H1 (cell line): ENCODE measurements at regions of chr2 and their contacts with region 1.

Region 1: DNA sequence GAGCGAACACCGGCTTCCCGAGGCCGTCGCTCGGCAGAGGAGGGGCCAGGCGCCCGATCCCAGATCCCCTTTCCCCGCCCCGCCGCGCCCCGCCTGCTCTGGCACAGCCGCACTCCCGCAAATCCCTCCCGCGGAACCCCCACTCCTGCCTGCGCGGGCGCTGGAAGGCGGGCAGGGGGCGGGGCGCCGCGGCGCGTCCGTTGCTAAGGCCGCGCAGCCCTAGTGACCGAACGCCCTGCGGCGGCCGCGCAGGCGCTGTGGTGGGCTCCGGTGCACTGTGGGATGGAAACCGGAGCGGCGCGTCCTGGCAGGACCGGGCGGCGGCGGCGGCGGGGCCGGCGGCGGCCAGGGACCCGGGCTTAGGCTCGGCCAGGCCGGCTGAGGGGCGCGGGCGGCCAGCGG is at the start of gene TRAF3IP1:
- DNase-seq: peak; percentile 62 to 94
- H3K4me3 ChIP-seq: peak within 1 kb of the TSS; percentile 65 to 91 (median 66)
- H3K27ac ChIP-seq: no peak within 1 kb of the TSS
- H3K4me1 ChIP-seq: peaks cover 0 to 10% (median 0%) of the 10 kb centered on the region in 4 experiments; a peak in 2 of 7 replicates
- H3K27me3 ChIP-seq: no peaks in the 10 kb centered on the region; a peak in 1 of 7 replicates
- CTCF ChIP-seq: no peak
- EP300 ChIP-seq: no peak
- POLR2A ChIP-seq: no peak
- RAD21 ChIP-seq: no peak
- total RNA-seq, gene TRAF3IP1: 15.9 and 17.5 TPM in 2 replicates

Region 2: DNA sequence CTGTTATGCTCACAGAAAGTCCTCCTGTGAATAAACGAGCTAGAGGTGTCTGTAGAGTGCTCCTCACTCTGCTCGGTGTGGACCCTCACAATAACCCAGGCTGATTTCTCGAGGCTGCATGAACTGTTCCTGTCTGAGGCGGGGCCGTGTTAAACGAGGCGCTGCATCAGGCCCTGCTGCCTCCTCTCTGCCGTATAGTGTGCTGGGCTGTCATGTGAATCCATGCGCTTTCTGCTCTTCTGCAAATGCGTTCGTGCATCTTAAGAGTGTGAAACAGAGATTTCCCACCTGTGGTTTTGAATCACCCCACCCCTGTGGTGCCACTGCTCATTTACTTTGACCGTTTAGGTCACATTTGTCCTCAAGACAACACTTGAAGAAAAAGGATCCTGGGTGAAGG is 26.3 kb after region 1 on chr2:
- CTCF ChIA-PET with region 1: interaction called, 11 read pairs
- POLR2A ChIA-PET with region 1: no interaction called
- DNase-seq: no peak
- H3K4me3 ChIP-seq: no peak overlapping the region
- H3K27ac ChIP-seq: no peak overlapping the region
- H3K4me1 ChIP-seq: 0 out of 7 replicates have a peak, but pooled peaks cover 0 to 2% (median 0%) of the 10 kb centered on the region in 4 experiments
- H3K27me3 ChIP-seq: no peaks in the 10 kb centered on the region
- CTCF ChIP-seq: no peak
- EP300 ChIP-seq: no peak
- POLR2A ChIP-seq: no peak
- RAD21 ChIP-seq: no peak